ENCODE measurements at regions of chr13 and their contacts with region 1.

Region 1: DNA sequence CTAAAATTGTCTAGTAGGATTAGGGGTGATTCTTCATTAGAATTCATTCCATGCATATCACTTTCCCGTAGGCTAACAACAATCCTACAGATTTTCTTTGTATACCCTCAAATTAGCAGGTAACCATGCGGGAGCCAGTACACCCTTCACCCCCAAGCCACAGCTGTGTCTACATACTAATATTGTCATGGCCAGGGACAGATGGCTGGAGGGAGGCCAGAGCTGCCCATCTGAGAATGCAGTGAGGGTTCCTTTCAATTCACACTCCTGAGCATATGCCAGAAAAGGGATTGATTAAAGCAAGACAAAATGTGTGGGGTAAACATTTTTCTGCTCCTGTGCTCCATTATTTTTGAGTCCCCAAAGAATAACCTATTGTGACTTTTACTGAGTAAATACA is 68.9 kb downstream of the FREM2 start:
- DNase-seq: no peak
- H3K4me3 ChIP-seq: no peak overlapping the region
- H3K27ac ChIP-seq: no peak overlapping the region
- H3K4me1 ChIP-seq: no peaks in the 10 kb centered on the region
- H3K27me3 ChIP-seq: peaks cover 0 to 14% (median 0%) of the 10 kb centered on the region in 4 donors
- CTCF ChIP-seq: no peak
- POLR2A ChIP-seq: no peak

Region 2: GRCh38 chr13:38707460-38707859 is 48.3 kb before region 1 on chr13:
- intact Hi-C with region 1: loop called (anchors 5 kb)
- DNase-seq: no peak
- H3K4me3 ChIP-seq: no peak overlapping the region
- H3K27ac ChIP-seq: no peak overlapping the region
- H3K4me1 ChIP-seq: no peaks in the 10 kb centered on the region
- H3K27me3 ChIP-seq: no peaks in the 10 kb centered on the region
- CTCF ChIP-seq: no peak
- POLR2A ChIP-seq: no peak

Measured in esophagus squamous epithelium (tissue), 5 donors.